CD4-positive, alpha-beta memory T cell (primary cell): ENCODE measurements at regions of chr6 and their contacts with region 1.

Region 1: DNA sequence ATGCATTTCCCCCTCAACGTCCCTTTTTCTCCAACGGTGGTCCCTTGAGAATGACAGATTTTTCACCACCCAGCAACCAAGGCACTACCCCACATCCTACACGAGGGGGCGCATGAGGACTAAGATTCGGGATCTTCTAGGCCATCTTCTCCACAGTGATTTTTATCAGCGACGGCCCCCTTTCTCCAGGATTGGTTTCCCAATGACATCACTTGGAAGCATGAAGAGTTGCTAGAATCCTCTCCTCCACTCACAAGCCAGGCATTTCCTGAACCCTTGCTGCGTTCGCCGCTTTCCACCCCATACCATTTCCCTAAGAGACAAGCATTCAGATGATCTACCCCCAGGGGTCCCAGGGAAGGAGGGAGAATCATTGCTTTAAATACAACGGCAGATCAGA is 252.0 kb downstream of the HIVEP2 start:
- DNase-seq: peak; percentile 54 to 62 (median 58)
- H3K4me3 ChIP-seq: no peak overlapping the region
- H3K4me3 Mint-ChIP-seq: peak overlapping the region in 1 of 8 donors; percentile 58
- H3K27ac ChIP-seq: no peak overlapping the region
- H3K27ac Mint-ChIP-seq: peak overlapping the region in 4 of 7 donors; percentile 0 to 74 (median 60)
- H3K4me1 ChIP-seq: peaks cover 7% of the 10 kb centered on the region
- H3K4me1 Mint-ChIP-seq: peaks cover 5 to 21% (median 8%) of the 10 kb centered on the region in 4 donors
- H3K27me3 ChIP-seq: no peaks in the 10 kb centered on the region
- H3K27me3 Mint-ChIP-seq: no peaks in the 10 kb centered on the region

Region 2: GRCh38 chr6:142474531-142475289 is 218.2 kb before region 1 on chr6:
- CTCF ChIA-PET with region 1: interaction called, 20 read pairs
- POLR2A ChIA-PET with region 1: no interaction called
- intact Hi-C with region 1: loop called (anchors 1 kb)
- DNase-seq: peak in 4 of 5 donors; percentile 33 to 42 (median 40)
- H3K4me3 ChIP-seq: no peak overlapping the region
- H3K4me3 Mint-ChIP-seq: no peak overlapping the region
- H3K27ac ChIP-seq: no peak overlapping the region
- H3K27ac Mint-ChIP-seq: no peak overlapping the region
- H3K4me1 ChIP-seq: no peaks in the 10 kb centered on the region
- H3K4me1 Mint-ChIP-seq: peaks cover 0 to 5% (median 2%) of the 10 kb centered on the region in 4 donors
- H3K27me3 ChIP-seq: no peaks in the 10 kb centered on the region
- H3K27me3 Mint-ChIP-seq: no peaks in the 10 kb centered on the region

Region 3: DNA sequence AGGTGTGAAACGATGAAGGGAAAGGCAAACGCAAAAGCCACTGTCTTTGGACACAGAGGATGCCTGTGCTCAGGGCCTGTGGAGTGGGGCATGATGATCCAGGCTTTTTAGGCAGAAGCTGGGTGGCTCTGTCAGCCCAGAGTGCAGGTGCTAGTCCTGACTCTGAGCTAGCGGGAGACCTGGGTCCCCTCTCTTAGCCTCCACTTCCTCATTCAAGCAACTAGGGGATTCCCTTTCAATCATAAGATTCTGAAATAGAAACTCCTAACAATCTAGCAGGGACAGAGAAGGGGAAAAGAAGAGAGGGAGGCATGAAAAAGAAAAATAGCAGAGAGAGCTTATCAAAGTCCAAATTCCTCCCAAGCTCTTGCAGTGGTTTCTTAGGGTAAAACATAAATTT is 259.7 kb after region 1 on chr6:
- CTCF ChIA-PET with region 1: interaction called, 24 read pairs
- POLR2A ChIA-PET with region 1: no interaction called
- intact Hi-C with region 1: loop called (anchors 1 kb)
- DNase-seq: no peak
- H3K4me3 ChIP-seq: no peak overlapping the region
- H3K4me3 Mint-ChIP-seq: no peak overlapping the region
- H3K27ac ChIP-seq: no peak overlapping the region
- H3K27ac Mint-ChIP-seq: peak overlapping the region; percentile 3 to 86 (median 57)
- H3K4me1 ChIP-seq: peaks cover 6% of the 10 kb centered on the region
- H3K4me1 Mint-ChIP-seq: peaks cover 13 to 20% (median 16%) of the 10 kb centered on the region in 4 donors
- H3K27me3 ChIP-seq: no peaks in the 10 kb centered on the region
- H3K27me3 Mint-ChIP-seq: no peaks in the 10 kb centered on the region

Region 4: DNA sequence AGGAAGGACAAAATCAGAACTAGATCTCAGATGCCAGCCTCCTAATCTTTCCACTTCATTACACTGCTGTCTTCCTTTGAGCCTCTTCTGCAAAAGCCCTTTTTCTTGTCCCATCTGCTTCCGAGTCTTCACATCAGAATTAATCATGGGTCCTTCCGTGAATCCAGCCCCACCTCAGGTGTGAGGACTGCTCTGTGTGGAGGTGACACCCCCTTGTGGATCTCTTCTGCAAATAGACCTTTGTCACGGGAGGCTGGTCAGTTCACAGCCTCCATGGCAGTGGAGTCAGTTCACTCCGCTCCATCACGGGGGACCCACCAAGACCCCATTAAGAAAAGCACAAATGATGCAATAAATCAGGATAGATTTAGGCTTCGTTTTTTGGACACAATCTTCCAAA is 586.4 kb after region 1 on chr6:
- CTCF ChIA-PET with region 1: interaction called, 13 read pairs
- POLR2A ChIA-PET with region 1: no interaction called
- intact Hi-C with region 1: loop called (anchors 1 kb)
- DNase-seq: peak in 1 of 5 donors; percentile 1
- H3K4me3 ChIP-seq: no peak overlapping the region
- H3K4me3 Mint-ChIP-seq: no peak overlapping the region
- H3K27ac ChIP-seq: no peak overlapping the region
- H3K27ac Mint-ChIP-seq: no peak overlapping the region
- H3K4me1 ChIP-seq: no peaks in the 10 kb centered on the region
- H3K4me1 Mint-ChIP-seq: peaks cover 0 to 3% (median 0%) of the 10 kb centered on the region in 4 donors
- H3K27me3 ChIP-seq: no peaks in the 10 kb centered on the region
- H3K27me3 Mint-ChIP-seq: no peaks in the 10 kb centered on the region

Region 5: DNA sequence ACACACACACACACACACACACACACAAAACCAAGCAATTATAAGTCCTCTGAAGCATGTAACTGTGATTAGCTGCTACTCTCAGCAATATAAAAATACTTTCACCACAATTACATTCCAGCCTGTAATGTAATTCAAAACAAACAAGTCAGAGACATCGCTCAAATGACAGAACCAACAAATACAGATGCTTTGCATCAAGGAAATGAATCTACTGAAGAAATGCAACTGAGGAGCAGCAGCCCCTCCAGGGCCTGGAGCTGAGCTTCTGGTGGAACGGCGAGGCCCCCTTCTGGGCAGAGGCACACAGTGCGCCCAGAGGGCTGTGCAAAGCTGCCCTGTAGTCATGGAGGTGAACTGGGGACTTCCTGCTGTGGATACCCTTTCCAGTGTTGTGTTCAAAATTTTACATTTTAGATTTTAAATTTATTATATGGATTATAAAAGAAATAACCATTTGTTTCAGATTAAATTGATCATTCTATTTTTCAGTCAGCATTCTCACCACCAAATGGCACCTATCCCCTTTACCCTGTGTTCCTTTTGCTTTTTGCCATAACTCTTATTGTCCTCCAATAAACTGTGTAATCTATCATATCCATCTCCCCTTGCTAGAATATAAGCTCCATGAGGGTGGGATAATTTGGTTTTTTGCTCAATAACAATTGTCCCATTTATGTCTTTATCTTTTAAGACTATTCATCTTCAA is 734.3 kb after region 1 on chr6:
- CTCF ChIA-PET with region 1: interaction called, 86 read pairs
- POLR2A ChIA-PET with region 1: interaction called, 4 read pairs
- intact Hi-C with region 1: loop called (anchors 1 kb)
- DNase-seq: peak; percentile 65 to 73 (median 70)
- H3K4me3 ChIP-seq: no peak overlapping the region
- H3K4me3 Mint-ChIP-seq: no peak overlapping the region
- H3K27ac ChIP-seq: no peak overlapping the region
- H3K27ac Mint-ChIP-seq: peak overlapping the region in 2 of 7 donors; percentile 15 to 81
- H3K4me1 ChIP-seq: no peaks in the 10 kb centered on the region
- H3K4me1 Mint-ChIP-seq: no peaks in the 10 kb centered on the region
- H3K27me3 ChIP-seq: no peaks in the 10 kb centered on the region
- H3K27me3 Mint-ChIP-seq: no peaks in the 10 kb centered on the region